Activated CD8-positive, alpha-beta memory T cell treated with anti-CD3 and anti-CD28 coated beads, Interleukin-2, amount 10 ng/mL, durations not matched to agents 7 days and 5 days (primary cell): ENCODE measurements at regions of chr22 and their contacts with region 1.

Region 1: DNA sequence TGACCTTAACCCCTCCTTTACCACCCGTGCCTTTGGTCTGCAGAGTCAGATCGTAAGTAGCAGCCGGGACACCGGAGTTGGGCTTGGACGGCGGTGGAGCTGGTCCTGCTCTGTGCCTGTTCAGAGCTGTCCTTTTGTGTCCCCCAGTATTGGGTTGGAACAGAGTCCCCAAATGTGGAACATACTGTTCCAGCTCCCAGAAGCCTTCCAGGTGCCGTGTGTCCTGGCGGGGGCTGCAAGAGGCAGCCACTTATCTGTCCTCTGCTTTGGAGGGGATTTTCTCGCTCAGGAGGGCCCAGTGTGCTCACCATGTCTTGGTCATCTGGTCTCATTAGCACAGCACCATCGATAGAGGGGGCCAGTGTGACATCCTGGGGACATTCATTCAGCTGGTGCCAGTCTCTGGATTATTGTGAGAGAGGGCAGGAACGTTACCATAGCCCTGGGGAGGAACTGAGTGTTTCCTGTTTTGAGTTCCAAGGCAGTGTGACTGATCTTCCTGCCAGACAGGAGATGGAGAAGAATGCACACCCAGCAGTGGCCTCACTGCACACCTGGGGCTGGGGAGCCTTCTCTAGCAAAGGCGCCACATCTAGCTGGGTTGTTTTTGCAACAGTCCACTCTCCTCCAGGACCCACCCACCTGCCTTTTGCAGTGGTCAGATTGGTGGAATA is 12.4 kb downstream of the CRELD2 start:
- DNase-seq: peak; percentile 69
- ATAC-seq: no peak
- H3K4me3 Mint-ChIP-seq: no peak overlapping the region
- H3K27ac Mint-ChIP-seq: no peak overlapping the region
- H3K4me1 Mint-ChIP-seq: peaks cover 41% of the 10 kb centered on the region
- H3K27me3 Mint-ChIP-seq: no peaks in the 10 kb centered on the region

Region 2: DNA sequence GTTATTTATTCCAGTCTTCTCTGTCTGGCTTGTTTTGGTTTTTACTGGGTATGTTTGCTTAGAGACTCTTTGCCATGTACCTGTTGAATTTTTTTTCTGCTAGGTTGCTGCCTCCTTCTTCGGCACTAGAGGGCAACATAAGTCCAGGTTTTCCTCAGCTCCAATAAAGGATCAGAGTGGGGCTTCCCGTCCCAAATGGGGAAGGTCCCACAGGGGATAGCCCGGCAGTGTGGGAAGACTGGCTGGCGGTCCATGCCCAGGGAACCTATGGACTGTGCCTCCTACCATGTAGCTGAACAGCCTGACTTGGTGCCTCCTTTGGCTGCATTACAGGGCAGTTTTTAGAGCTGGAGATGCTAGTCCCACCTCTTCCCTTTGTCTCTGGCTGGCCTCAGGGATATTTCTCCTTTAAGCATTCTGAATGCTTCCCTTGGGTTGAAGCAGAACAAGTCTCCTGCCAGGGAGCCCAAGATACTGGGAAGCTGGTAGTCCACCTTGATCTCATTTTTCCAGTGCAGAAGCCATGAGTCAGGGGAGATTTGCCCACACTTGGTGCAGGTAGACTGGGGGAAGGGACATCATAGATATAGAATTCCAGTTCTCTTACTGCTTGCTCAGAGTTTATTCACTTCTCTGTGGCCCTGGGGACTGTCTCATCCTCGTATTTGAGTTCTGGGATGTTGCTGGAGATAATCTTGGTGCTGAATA is 163.4 kb before region 1 on chr22:
- CTCF ChIA-PET with region 1: interaction called, 23 read pairs
- DNase-seq: no peak
- ATAC-seq: peak; percentile 54
- H3K4me3 Mint-ChIP-seq: no peak overlapping the region
- H3K27ac Mint-ChIP-seq: no peak overlapping the region
- H3K4me1 Mint-ChIP-seq: peaks cover 12% of the 10 kb centered on the region
- H3K27me3 Mint-ChIP-seq: no peaks in the 10 kb centered on the region

Region 3: GRCh38 chr22:49970528-49971231 is 39.8 kb after region 1 on chr22:
- CTCF ChIA-PET with region 1: interaction called, 13 read pairs
- DNase-seq: peak; percentile 98
- ATAC-seq: peak; percentile 93
- H3K4me3 Mint-ChIP-seq: peak overlapping the region; percentile 71
- H3K27ac Mint-ChIP-seq: peak overlapping the region; percentile 88
- H3K4me1 Mint-ChIP-seq: peaks cover 15% of the 10 kb centered on the region
- H3K27me3 Mint-ChIP-seq: no peaks in the 10 kb centered on the region

Region 4: DNA sequence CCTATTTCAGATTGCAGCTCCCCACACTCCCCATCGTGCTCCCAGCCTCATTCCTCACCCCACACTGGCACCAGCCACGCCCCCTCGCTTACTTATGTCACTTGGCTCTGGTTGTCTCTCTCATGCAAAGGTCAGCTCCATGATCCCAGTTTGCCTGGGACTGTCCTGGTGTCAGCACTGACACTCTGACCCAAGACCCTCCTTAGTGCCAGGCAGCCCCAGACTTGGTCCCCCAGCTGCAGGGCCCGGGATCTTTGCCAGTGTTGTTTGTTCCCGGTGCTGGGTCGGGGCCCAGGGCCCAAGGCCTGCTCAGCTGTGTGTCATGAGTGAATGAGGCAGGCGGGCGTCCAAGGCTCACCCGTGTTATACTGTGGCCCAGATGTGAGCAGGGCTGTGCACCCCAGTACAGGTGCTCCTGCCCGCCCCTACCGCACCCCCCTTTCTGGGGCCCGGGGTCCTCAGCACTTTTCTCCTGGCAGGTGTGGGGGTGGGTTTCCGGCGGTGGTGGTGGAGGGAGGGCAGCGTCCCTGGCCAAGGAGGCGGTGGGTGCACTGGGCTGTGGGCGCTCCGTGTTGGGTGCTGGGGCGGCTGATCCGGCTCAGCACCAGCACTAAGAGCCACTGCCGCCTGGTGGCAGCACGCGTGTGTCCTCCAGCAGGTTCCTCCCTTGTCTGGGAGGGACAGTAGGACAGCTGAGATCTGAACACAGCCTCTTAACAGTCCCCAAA is 62.2 kb after region 1 on chr22:
- CTCF ChIA-PET with region 1: interaction called, 19 read pairs
- DNase-seq: peak; percentile 80
- ATAC-seq: peak; percentile 95
- H3K4me3 Mint-ChIP-seq: no peak overlapping the region
- H3K27ac Mint-ChIP-seq: no peak overlapping the region
- H3K4me1 Mint-ChIP-seq: peaks cover 5% of the 10 kb centered on the region
- H3K27me3 Mint-ChIP-seq: peaks cover 12% of the 10 kb centered on the region